GM10248 (cell line): ENCODE measurements at regions of chr17 and their contacts with region 1.

Region 1: DNA sequence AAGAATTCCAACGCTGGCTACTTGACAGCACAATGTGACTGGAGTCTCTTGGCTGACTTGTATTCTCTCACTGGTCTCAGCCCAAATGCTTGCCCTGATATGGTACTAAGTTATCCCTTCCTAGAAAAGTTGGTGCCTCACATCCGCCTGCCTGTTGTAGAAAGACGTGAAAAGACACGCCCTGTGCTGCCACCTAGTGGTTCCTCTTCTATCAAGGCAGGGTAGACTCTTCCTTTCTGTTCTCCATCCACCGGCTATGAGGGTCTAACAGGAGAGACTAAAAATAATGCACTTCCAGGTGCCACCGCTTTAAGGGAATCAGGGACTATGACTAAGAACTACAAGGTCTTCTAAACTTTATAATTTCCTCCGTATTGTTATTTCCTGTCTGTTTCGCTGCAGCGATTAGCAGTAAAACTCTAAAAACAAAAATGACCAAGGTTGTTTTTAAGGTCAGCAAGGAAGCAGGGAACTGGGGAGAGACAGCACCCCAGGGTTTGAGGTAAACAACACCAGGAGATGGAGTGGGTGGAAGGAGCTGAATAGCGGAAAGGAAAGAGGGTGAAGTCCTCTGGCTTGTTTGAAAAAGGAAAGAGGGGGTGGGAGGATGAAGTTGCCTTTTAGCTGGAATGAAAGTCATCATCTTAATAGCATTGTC is 109.5 kb downstream of the YPEL2 start:
- DNase-seq: peak; percentile 79
- CTCF ChIP-seq: peak; percentile 83

Region 2: DNA sequence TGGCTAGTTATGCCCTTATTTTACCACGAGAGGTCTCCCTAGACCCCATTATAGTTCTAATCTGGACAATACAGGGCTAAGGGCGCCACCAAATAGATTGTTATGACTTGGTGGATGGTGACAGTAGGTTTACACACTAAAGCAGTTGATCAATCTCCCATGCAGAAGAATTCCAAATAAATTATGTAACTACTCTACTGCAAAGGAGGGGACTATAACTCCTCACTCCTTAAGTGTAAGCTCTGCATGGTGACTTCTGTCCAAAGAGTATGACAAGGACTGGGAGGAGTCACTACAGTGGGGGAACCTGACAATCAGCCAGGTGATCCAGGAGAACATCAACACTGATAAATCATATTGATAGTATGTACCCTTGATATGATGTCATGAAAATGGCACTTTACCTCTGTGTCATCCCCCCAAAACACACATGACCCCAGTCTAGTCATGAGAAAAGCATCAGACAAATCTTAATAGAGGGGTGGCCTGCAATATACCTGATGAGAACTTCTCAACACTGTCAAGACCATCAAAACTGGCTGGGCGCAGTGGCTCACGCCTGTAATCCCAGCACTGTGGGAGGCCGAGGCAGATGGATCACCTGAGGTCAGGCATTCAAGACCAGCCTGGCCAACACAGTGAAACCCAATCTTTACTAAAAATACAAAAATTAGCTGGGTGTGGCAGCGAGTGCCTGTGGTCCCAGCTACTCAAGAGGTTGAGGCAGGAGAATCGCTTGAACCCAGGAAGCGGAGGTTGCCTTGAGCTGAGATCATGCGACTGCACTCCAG is 129.6 kb before region 1 on chr17:
- CTCF ChIA-PET with region 1: interaction called, 207 read pairs
- POLR2A ChIA-PET with region 1: no interaction called
- DNase-seq: peak; percentile 76
- CTCF ChIP-seq: peak; percentile 82

Region 3: GRCh38 chr17:59329638-59330313 is 111.1 kb before region 1 on chr17:
- CTCF ChIA-PET with region 1: interaction called, 170 read pairs
- POLR2A ChIA-PET with region 1: interaction called, 3 read pairs
- DNase-seq: peak; percentile 71
- CTCF ChIP-seq: peak; percentile 84

Region 4: DNA sequence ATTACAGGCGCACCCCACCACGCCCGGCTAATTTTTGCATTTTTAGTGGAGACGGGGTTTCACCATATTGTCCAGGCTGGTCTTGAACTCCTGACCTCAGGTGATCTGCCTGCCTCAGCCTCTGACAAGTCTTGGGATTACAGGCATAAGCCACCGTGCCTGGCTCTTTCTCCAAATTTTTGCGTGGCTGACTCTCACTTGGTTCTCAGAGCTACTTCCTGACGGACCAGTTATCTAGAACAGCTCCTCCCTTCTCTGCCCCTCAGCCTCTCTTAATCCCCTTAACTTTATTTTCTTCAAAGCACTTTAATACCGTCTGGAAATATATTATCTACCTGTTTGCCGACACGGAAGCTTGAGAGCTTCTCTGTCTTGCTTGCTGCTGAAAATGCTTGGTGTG is 105.2 kb before region 1 on chr17:
- CTCF ChIA-PET with region 1: interaction called, 170 read pairs
- POLR2A ChIA-PET with region 1: no interaction called
- DNase-seq: no peak
- CTCF ChIP-seq: no peak

Region 5: DNA sequence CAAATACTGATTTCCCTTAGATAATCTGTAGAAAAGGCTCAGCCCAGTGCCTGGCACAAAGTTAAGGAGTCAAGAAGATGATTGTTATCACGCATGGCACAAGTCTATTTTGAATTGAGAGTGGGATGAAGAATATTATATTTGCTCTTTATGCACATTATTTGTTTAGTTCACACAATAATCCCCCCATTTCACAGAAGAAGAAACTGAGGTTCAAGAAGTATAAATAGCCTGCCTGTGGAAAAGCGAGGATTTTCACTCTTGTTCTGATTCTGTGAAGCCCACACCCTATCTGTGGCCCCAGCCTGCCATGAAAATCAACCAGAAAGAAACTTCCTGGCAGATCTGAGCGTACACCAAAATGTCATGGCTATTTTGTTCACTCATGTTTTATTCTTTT is 36.4 kb before region 1 on chr17:
- CTCF ChIA-PET with region 1: no interaction called
- POLR2A ChIA-PET with region 1: no interaction called
- DNase-seq: no peak
- CTCF ChIP-seq: no peak

Region 6: GRCh38 chr17:59415397-59415796 is 25.5 kb before region 1 on chr17:
- CTCF ChIA-PET with region 1: interaction called, 10 read pairs
- POLR2A ChIA-PET with region 1: no interaction called
- DNase-seq: no peak
- CTCF ChIP-seq: no peak

Region 7: DNA sequence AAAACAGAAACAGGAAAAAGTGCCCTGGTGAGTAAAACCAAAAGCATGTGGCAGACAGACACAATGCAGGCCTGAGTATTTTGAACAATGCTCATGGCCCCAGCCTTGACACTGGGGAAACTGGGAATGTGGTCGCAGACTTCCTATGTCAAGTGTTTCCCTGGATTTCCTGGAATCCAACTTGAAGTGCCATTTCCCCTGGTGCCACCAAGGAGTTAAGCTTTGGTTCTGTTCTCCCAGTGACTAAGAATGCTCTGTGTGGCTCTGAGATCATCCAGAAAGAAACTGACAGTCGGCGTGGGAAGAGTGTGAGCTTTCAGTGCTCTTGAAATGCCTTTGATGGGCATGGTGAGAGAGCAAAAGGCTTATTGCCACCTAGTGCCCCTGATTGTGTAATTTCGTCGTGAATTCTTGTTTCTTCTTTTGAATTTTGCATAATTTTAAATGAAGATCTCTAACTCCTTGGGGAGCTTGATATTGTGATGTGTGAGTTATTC is 13.4 kb before region 1 on chr17:
- CTCF ChIA-PET with region 1: interaction called, 148 read pairs
- POLR2A ChIA-PET with region 1: no interaction called
- DNase-seq: peak; percentile 50
- CTCF ChIP-seq: no peak

Region 8: GRCh38 chr17:59451706-59452105 is 10.8 kb after region 1 on chr17:
- CTCF ChIA-PET with region 1: interaction called, 15 read pairs
- POLR2A ChIA-PET with region 1: no interaction called
- DNase-seq: no peak
- CTCF ChIP-seq: no peak